ENCODE measurements at regions of chr17 and their contacts with region 1.

Region 1: GRCh38 chr17:6913608-6914443 is 82.0 kb upstream of the ALOX12 start:
- DNase-seq: peak; percentile 77
- H3K4me3 ChIP-seq: peak overlapping the region; percentile 43 to 60
- H3K27ac ChIP-seq: no peak overlapping the region
- H3K4me1 ChIP-seq: peaks cover 0 to 5% of the 10 kb centered on the region in 2 experiments; a peak in 1 of 4 replicates
- H3K27me3 ChIP-seq: no peaks in the 10 kb centered on the region
- CTCF ChIP-seq: peak; percentile 90
- EP300 ChIP-seq: no peak
- RAD21 ChIP-seq: peak; percentile 91

Region 2: GRCh38 chr17:6903326-6903900 is 10.4 kb before region 1 on chr17:
- CTCF ChIA-PET with region 1: interaction called, 14 read pairs
- POLR2A ChIA-PET with region 1: no interaction called
- DNase-seq: no peak
- H3K4me3 ChIP-seq: no peak overlapping the region
- H3K27ac ChIP-seq: no peak overlapping the region
- H3K4me1 ChIP-seq: no peaks in the 10 kb centered on the region
- H3K27me3 ChIP-seq: no peaks in the 10 kb centered on the region
- CTCF ChIP-seq: no peak
- EP300 ChIP-seq: no peak
- RAD21 ChIP-seq: no peak

Region 3: DNA sequence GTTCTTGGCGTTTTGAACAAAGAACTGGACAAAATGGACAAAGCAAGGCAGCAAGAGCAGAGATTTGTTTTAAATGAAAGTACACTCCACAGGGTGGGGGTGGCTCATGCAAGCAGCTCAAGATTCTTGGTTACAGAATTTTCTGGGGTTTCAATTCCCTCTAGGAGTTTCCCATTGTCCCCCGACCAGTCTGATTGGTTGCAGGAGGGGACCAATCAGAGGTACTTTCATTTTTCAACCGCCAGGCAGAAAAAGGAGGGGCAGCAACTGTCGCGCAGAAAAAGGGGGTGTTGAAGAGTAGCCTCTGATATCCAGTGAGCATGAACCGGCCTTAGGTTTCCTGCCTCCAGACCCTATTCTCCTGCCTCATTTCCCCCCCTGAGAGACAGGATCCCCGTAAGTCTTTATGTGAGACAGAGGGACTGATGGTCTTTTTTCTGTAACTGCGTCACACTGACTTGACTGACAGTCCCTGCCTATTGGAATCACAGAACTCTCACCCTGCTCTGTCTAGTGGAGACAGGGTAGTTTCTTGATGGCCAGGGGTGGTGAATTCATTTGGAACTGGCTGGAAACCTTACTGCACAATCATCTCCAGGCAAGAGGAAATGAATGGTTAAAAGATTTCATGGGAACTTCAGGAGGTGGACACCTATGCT is 22.7 kb after region 1 on chr17:
- CTCF ChIA-PET with region 1: interaction called, 15 read pairs
- POLR2A ChIA-PET with region 1: no interaction called
- DNase-seq: peak; percentile 33
- H3K4me3 ChIP-seq: peak overlapping the region; percentile 53 to 74
- H3K27ac ChIP-seq: peak overlapping the region; percentile 24 to 92; a peak in 3 of 4 replicates
- H3K4me1 ChIP-seq: no peaks in the 10 kb centered on the region
- H3K27me3 ChIP-seq: no peaks in the 10 kb centered on the region
- CTCF ChIP-seq: no peak
- EP300 ChIP-seq: no peak
- RAD21 ChIP-seq: no peak

Region 4: DNA sequence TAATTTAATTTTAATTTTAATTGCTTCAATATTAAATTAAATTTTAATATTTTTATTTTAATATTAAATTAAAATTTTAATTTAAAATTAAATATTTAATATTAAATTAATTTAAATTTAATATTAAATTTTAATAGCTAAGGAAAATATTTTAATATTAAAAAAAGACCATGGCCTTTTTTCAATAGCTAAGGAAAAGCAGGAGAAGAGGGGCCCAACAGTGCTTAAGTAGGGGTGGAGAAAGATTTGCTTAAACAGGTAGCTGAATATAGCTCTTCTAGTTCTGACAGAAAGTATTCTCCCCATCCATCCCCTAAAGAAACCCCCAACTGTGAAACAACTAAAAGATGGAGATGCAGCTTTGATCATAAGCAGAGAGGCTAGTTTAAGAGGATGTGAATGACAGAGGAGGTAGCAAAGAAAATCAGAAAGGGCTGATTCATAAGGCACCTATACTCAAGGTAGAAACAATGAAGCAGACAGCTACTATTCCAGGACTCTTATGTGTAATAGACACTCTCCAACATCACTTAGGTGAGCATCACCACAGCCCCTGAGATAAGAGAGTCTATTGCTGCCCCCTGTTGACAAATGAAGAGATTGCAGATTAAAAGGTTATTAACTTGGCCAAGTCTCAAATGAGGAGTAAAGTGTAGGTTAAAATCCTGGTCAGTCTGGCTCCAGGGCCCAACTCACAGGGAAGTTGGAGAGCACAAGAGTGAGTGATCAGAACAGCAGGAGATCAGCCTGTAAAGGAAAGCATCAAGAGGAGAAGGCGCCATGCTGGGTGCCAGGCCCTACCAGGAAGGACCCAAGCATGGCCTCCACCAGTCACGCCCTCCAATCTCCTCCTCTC is 90.8 kb after region 1 on chr17:
- CTCF ChIA-PET with region 1: interaction called, 72 read pairs
- POLR2A ChIA-PET with region 1: no interaction called
- DNase-seq: peak; percentile 70
- H3K4me3 ChIP-seq: no peak overlapping the region; a peak in 1 of 4 replicates
- H3K27ac ChIP-seq: no peak overlapping the region
- H3K4me1 ChIP-seq: no peaks in the 10 kb centered on the region
- H3K27me3 ChIP-seq: no peaks in the 10 kb centered on the region
- CTCF ChIP-seq: peak; percentile 81
- EP300 ChIP-seq: no peak
- RAD21 ChIP-seq: peak; percentile 86

Region 5: GRCh38 chr17:7021993-7022778 is 108.4 kb after region 1 on chr17:
- CTCF ChIA-PET with region 1: interaction called, 64 read pairs
- POLR2A ChIA-PET with region 1: no interaction called
- DNase-seq: peak; percentile 92
- H3K4me3 ChIP-seq: peak overlapping the region in 1 of 2 experiments; percentile 47; a peak in 2 of 4 replicates
- H3K27ac ChIP-seq: no peak overlapping the region
- H3K4me1 ChIP-seq: peaks cover 5 to 30% of the 10 kb centered on the region in 2 experiments; a peak in 2 of 4 replicates
- H3K27me3 ChIP-seq: no peaks in the 10 kb centered on the region
- CTCF ChIP-seq: peak; percentile 81
- EP300 ChIP-seq: no peak
- RAD21 ChIP-seq: peak; percentile 74

Measured in SK-N-SH (cell line).